H1 (cell line): ENCODE measurements at regions of chr7 and their contacts with region 1.

Region 1: GRCh38 chr7:24812310-24812945 is 55.2 kb upstream of the GSDME start:
- DNase-seq: peak in 1 of 2 experiments; percentile 72
- H3K4me3 ChIP-seq: no peak overlapping the region
- H3K27ac ChIP-seq: no peak overlapping the region
- H3K4me1 ChIP-seq: no peaks in the 10 kb centered on the region
- H3K27me3 ChIP-seq: no peaks in the 10 kb centered on the region
- CTCF ChIP-seq: peak; percentile 70 to 81 (median 78)
- EP300 ChIP-seq: 0 out of 3 replicates have a peak, but pooled peaks of 1 of the 2 experiments have one; percentile 59
- POLR2A ChIP-seq: no peak
- RAD21 ChIP-seq: peak; percentile 66 to 77

Region 2: DNA sequence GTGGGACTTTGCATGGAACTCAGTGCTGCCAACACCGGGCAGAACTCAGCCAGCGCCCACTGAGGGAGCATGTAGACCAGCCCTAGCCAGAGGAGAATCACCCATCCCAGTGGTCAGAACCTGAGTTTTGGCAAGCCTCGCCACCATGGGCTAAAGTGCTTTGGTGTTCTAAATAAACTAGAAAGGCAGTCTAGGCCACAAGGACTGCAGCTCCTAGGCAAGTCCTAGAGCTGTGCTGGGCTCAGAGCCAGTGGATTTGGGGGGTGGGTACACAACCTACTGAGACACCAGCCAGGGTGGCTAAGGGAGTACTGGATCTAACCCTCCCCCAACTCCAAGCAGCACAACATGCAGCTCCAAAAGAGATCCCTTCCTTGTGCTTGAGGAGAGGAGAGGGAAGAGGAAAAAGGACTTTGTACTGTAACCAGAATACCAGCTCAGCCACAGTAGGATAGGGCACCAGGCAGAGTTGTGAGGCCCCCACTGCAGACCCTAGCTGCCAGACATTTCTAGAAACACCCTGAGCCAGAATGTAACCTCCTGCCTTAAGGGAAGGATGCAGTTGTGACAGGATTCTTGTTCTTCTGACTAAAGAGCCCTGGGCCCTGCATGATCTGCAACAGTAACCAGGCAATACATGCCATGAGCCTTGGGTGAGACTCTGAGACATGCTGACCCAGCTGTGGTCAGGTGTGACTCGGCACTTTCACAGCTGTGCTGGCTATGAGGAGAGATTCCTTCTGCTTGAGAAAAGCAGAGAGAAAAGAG is 79.6 kb before region 1 on chr7:
- CTCF ChIA-PET with region 1: no interaction called
- POLR2A ChIA-PET with region 1: no interaction called
- DNase-seq: no peak
- H3K4me3 ChIP-seq: no peak overlapping the region
- H3K27ac ChIP-seq: no peak overlapping the region
- H3K4me1 ChIP-seq: peaks cover 0 to 1% (median 0%) of the 10 kb centered on the region in 4 experiments; a peak in 1 of 7 replicates
- H3K27me3 ChIP-seq: no peaks in the 10 kb centered on the region
- CTCF ChIP-seq: no peak
- EP300 ChIP-seq: no peak
- POLR2A ChIP-seq: no peak
- RAD21 ChIP-seq: no peak

Region 3: DNA sequence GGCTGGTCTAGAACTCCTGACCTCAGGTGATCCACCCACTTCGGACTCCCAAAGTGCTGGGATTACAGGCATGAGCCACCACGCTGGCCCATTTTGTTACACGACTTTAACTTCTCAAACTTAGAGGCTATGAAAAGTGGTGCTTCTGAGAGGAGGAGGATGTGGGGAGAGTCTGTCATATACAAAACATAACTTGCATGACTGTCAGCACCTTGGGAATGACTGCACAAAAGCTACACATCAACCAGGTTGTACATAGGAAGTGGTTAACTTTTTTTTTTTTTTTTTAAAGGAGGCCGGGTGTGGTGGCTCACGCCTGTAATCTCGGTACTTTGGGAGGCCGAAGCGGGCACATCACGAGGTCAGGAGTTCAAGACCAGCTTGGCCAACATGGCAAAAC is 11.8 kb before region 1 on chr7:
- CTCF ChIA-PET with region 1: interaction called, 21 read pairs
- POLR2A ChIA-PET with region 1: no interaction called
- DNase-seq: no peak
- H3K4me3 ChIP-seq: no peak overlapping the region
- H3K27ac ChIP-seq: no peak overlapping the region
- H3K4me1 ChIP-seq: peaks cover 0 to 2% (median 0%) of the 10 kb centered on the region in 4 experiments; a peak in 1 of 7 replicates
- H3K27me3 ChIP-seq: no peaks in the 10 kb centered on the region
- CTCF ChIP-seq: no peak
- EP300 ChIP-seq: no peak
- POLR2A ChIP-seq: no peak
- RAD21 ChIP-seq: no peak

Region 4: DNA sequence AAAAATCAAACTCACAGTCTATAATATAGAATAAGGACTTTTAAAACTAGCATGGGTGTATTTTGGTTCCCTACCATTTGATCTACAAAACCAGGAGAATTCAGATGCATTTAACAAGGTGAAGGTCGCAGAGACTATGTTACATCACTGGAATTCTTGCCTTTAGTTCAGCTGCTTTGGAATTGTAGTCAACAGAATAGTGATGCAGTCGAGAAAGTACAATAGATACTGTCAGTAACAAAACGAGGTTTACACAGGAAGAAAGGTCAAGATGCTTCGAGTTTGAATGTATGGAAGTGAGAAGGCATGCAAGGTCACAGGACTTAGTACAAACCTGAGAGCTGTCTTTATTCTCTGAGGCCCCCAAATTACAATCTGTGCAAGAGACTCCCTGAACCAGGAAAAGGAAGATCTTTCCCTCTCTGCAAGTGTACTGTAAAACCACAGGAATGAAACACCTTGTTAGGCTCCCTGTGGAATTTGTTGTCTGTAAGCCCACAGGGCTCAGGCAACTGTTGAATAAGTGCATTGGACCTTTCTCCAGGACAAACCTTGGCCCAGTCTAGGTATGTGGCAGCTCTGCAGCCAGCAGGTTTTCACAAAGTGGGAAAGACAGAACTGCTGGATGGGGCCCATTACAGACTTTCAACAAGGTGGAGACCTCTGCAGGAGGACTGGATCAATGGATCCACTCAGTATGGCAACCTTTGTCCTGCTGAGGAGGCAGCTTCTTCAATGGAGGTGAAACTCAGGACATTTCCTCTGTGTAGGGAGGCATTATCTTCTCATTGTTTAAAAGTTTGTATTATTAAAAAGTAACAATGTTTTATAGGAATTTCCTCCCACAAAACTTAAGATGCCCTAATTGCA is 45.9 kb after region 1 on chr7:
- CTCF ChIA-PET with region 1: interaction called, 11 read pairs
- POLR2A ChIA-PET with region 1: no interaction called
- DNase-seq: no peak
- H3K4me3 ChIP-seq: no peak overlapping the region
- H3K27ac ChIP-seq: no peak overlapping the region
- H3K4me1 ChIP-seq: peaks cover 0 to 2% (median under 1%) of the 10 kb centered on the region in 4 experiments; a peak in 2 of 7 replicates
- H3K27me3 ChIP-seq: no peaks in the 10 kb centered on the region
- CTCF ChIP-seq: no peak
- EP300 ChIP-seq: no peak
- POLR2A ChIP-seq: no peak
- RAD21 ChIP-seq: no peak

Region 5: DNA sequence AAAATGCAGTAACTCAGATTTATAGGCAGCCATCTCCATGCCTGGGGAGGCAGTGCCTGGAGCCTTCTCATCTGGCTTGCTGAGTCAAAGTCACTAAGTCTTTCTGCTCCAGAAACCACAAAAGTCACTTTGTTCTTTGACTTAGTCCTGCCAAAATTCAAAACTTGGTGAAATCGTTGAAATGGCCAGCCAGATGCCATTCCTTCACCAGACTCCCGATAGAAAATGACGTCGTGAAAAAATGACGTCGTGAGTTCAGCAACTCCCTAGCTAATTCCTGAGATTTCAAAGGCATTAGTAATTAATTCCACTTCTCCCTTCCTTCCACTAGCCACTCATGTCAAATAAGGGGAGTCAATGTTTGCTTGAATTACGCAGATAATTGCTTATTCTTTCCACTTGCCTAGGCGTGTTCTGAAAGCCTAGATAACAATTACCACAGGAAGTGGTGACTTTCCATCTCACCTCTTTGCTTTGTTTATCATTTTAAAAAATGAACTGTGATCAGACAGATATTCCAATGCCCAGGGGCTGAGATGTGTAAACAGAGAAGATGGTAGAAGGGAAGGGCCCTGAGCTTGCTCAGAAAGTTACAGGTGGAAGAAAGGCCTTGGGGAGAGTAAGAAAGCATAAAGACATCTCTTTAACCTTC is 216.1 kb after region 1 on chr7:
- CTCF ChIA-PET with region 1: interaction called, 12 read pairs
- POLR2A ChIA-PET with region 1: no interaction called
- DNase-seq: no peak
- H3K4me3 ChIP-seq: no peak overlapping the region
- H3K27ac ChIP-seq: no peak overlapping the region
- H3K4me1 ChIP-seq: peaks cover 0 to 10% (median 3%) of the 10 kb centered on the region in 4 experiments; a peak in 4 of 7 replicates
- H3K27me3 ChIP-seq: 0 out of 7 replicates have a peak, but pooled peaks cover 0 to 4% (median 0%) of the 10 kb centered on the region in 4 experiments
- CTCF ChIP-seq: no peak
- EP300 ChIP-seq: no peak
- POLR2A ChIP-seq: no peak
- RAD21 ChIP-seq: no peak

Region 6: DNA sequence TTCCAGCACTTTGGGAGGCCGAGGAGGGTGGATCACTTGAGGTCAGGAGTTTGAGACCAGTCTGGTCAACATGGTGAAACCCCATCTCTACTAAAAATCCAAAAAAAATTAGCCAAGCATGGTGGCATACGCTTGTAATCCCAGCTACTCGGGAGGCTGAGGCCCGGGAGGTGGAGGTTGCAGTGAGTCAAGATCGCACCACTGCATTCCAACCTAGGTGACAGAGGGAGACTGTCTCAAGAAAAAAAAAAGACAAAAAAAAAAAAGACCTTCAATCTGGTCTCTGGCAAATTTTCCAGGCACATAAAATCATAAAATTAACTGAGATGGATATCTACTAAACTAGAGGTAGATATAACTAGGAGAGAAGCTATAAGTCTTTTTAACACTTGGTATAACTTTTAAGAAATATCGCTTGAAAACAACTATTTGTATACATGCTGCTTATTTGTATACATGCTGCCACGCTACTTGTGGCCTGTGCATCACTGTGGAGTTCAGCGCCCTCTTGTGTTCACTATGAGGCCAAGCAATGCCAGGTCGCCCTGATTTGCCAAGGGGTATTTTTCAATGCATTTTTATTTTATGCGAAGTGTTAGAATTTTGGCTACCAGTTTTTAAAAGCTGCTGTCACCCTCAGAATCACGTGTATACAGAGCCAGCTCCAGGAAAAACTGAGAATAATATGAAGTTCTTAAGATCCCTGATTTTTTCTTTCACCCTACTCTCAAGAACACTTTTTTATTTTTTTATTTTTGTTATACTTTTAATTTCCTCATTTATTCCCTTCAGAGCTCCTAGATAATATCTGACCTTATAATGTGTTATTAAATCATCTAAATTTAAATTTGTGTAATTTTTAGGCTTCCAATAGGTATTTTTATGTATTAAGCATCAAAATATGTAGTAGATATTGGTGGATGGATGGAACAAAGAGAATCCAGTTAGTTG is 285.9 kb after region 1 on chr7:
- CTCF ChIA-PET with region 1: interaction called, 84 read pairs
- POLR2A ChIA-PET with region 1: no interaction called
- DNase-seq: peak; percentile 15 to 55
- H3K4me3 ChIP-seq: no peak overlapping the region
- H3K27ac ChIP-seq: no peak overlapping the region
- H3K4me1 ChIP-seq: no peaks in the 10 kb centered on the region
- H3K27me3 ChIP-seq: no peaks in the 10 kb centered on the region
- CTCF ChIP-seq: peak; percentile 84 to 88 (median 87)
- EP300 ChIP-seq: no peak
- POLR2A ChIP-seq: no peak
- RAD21 ChIP-seq: peak; percentile 89 to 93